Activated T-helper 1 cell treated with anti-CD3 and anti-CD28 coated beads, Interleukin-12 subunit alpha, Interleukin-12 subunit beta, Interleukin-2, Interleukin-4 antibody, amounts not matched to agents 30 ng/mL and 10 ng/mL and 1 ng/mL, durations not matched to agents 14 hours and 24 hours and 36 hours (primary cell): ENCODE measurements at regions of chr9 and their contacts with region 1.

Region 1: GRCh38 chr9:132406554-132407122 is at the start of gene TTF1:
- DNase-seq: peak; percentile 91
- H3K4me3 Mint-ChIP-seq: peak within 1 kb of the TSS; percentile 87
- H3K27ac Mint-ChIP-seq: peak within 1 kb of the TSS; percentile 91
- H3K4me1 Mint-ChIP-seq: peaks cover 52% of the 10 kb centered on the region
- H3K27me3 Mint-ChIP-seq: peaks cover 16% of the 10 kb centered on the region
- total RNA-seq, gene TTF1: 33.1 and 33.3 TPM in 2 replicates

Region 2: GRCh38 chr9:132507746-132508469 is 101.3 kb after region 1 on chr9:
- intact Hi-C with region 1: loop called (anchors 1 kb)
- DNase-seq: peak; percentile 47
- H3K4me3 Mint-ChIP-seq: no peak overlapping the region
- H3K27ac Mint-ChIP-seq: no peak overlapping the region
- H3K4me1 Mint-ChIP-seq: peaks cover 14% of the 10 kb centered on the region
- H3K27me3 Mint-ChIP-seq: peaks cover 6% of the 10 kb centered on the region

Region 3: GRCh38 chr9:132651254-132651653 is 244.6 kb after region 1 on chr9:
- intact Hi-C with region 1: loop called (anchors 1 kb)
- DNase-seq: no peak
- H3K4me3 Mint-ChIP-seq: no peak overlapping the region
- H3K27ac Mint-ChIP-seq: no peak overlapping the region
- H3K4me1 Mint-ChIP-seq: peaks cover 16% of the 10 kb centered on the region
- H3K27me3 Mint-ChIP-seq: no peaks in the 10 kb centered on the region

Region 4: DNA sequence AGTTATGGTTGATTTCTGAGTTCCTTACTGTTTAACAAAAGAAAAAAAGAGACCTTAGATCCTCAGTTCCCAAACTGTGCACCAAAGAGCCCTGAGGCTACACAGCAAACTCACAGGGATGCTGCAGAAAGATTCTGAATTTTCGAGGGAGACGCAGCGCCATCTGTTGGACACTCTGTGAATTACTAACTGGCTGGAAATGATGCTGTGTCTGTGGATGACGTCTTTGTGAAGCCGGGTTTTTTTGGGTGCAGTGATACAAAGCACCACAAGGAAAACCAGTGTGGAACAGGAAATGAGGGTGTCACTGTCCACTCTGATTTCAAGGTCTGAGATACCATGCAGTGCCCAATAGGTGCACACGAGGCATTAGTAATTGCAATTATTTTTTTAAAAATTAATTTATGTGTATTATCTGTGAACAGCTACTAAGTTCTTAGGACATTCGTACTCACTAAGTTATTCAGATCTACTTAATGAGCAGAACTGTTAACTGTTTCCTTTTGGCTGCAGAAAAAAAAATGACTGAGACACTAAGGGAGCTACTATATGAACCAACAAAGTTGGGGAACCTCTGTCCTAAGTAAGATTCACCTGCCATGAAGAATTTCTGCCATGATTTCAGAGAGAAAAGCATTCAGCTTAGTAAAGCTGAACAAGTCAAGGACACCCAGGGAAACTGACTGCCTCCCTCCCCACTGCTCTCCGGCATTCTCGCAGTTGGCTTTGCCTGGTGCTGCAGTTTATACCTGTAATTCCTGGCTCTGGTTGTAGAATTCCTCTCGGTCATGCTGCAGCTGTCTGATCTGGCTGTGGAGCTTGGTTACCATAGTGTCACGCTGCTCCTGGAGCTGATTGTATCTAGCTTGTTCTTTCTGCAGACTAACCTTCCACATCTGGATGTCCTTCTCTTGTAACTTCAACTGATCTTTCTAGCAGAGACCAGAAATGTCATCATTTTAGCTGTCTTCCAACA is 495.5 kb after region 1 on chr9:
- intact Hi-C with region 1: loop called (anchors 1 kb)
- DNase-seq: peak; percentile 72
- H3K4me3 Mint-ChIP-seq: no peak overlapping the region
- H3K27ac Mint-ChIP-seq: no peak overlapping the region
- H3K4me1 Mint-ChIP-seq: peaks cover 8% of the 10 kb centered on the region
- H3K27me3 Mint-ChIP-seq: no peaks in the 10 kb centered on the region

Region 5: DNA sequence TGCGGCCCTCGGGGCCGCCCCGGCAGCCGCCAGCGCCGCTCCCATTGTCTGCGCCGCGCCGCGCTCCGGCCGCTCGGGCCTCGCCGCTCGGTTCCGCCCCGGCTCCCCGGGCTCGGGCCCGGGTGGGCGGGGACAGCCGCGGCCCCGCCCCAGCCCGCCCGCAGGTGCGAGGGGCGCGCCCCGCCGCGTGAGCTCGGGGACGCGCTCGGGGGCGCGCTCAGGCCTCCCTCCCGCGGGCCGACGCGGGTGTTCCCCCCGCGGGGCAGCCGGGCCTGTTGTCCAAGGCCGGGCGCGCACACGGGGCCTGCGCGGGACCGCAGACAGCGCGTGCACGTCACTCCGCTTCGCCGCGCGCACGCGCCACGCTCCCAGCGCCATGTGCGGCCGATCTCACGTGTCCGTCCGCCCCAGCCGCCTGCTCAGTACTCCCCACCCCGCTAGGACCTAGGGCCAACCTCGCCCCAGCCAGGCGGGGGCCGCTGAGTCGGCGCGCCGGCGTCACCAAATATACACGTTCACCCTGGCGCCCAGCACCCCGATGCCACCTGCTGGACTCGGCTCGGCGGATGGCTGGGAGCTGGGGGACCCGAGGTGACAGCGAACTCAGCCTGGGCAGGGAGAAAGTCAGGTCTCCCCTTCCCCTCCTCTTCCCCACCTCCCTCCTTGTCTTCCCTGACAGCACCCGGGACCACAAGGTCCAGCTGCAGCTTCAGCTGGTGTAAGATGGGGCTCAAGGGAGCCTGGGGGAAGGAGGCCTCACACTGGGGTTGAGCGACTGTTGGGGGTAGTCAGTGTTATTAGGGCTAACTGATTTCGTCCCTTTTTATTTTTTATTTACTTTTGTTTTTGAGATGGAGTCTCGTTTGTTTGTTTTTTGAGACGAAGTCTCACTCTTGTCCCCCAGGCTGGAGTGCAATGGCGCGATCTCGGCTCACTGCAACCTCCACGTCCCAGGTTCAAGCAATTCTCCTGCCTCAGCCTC is 742.8 kb after region 1 on chr9:
- intact Hi-C with region 1: loop called (anchors 10 kb)
- DNase-seq: peak; percentile 76
- H3K4me3 Mint-ChIP-seq: peak overlapping the region; percentile 81
- H3K27ac Mint-ChIP-seq: peak overlapping the region; percentile 81
- H3K4me1 Mint-ChIP-seq: peaks cover 31% of the 10 kb centered on the region
- H3K27me3 Mint-ChIP-seq: peaks cover 3% of the 10 kb centered on the region